Activated CD4-positive, alpha-beta T cell treated with anti-CD3 and anti-CD28 coated beads, Interleukin-2, amount 10 ng/mL, durations not matched to agents 7 days and 5 days (primary cell): ENCODE measurements at regions of chr3 and their contacts with region 1.

Region 1: DNA sequence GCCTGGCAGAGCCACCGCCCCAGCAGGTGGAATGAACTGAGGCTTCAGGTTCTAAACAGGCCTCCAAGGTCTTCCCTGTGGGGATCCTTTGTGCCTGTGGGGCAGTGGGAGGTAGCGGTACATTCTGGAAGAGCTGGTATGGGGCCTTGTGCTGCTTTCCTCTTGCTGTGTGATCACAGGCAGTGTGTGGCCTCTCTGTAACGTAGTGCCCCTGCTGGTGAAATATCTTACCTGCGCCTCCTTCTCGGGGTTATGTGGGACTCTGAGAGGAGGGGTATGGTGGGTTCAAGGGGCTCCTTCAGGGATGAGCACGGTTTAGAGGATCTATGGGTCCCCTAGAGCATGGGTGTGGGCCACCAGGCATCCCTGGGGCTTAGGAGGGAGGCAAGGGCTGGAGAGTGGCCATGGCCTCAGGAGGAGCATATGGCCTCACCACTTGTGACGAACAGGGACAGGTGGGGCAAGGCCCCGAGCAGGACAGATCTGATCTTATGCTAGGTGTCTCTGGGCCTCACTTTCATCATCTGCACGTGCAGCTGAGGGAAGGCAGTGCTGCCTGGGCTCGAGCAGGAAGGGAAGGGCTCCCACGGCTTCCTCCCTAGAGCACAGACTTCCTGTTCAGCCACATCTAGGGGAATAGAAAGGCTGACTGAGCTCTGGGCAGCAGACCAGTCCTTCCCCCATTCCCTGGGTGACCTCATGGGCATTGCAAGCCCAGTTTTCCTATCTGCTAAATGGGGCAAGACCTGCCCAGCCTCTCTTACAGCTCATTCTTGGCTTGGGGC is 1.9 kb upstream of the ALS2CL start:
- DNase-seq: peak; percentile 51
- H3K4me3 Mint-ChIP-seq: peak overlapping the region; percentile 15
- H3K27ac Mint-ChIP-seq: peak overlapping the region; percentile 88
- H3K4me1 Mint-ChIP-seq: peaks cover 52% of the 10 kb centered on the region
- H3K27me3 Mint-ChIP-seq: peaks cover 8% of the 10 kb centered on the region

Region 2: GRCh38 chr3:46655271-46655670 is 40.1 kb before region 1 on chr3:
- CTCF ChIA-PET with region 1: no interaction called
- POLR2A ChIA-PET with region 1: no interaction called
- DNase-seq: no peak
- H3K4me3 Mint-ChIP-seq: no peak overlapping the region
- H3K27ac Mint-ChIP-seq: no peak overlapping the region
- H3K4me1 Mint-ChIP-seq: peaks cover 3% of the 10 kb centered on the region
- H3K27me3 Mint-ChIP-seq: peaks cover 17% of the 10 kb centered on the region

Region 3: DNA sequence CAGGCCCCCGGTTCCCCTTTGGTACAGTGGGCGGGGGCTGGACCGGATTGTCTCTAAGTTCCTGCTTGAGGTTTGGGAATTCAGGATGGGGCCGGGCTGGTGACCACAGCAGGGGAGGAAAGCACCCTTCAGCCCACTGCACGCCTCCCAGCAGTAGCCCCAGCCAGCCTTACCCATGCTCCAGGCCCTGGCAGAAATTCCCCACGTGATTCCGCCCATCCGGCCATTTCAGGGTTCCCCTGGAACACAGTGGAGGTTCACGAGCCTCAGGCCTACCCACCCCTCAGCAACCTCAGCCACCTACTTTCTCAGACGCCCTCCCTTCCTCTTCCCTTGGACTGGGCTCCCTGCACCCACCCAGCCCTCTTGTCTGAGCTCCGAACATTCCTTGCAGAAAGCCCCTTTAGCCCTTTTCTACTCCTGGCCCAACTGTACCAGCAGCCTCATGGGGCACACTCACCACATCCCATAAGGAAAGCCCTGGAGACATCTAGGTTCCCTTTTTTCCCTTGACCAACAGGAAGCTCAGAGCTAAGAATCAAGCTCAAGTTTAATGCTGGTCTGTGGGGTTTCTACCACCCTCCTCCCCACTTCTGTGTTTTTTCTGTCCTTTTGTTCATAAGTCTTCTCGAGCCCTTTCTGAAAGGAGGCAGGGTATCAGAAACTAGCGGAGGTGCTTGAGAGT is 13.4 kb before region 1 on chr3:
- CTCF ChIA-PET with region 1: interaction called, 10 read pairs
- POLR2A ChIA-PET with region 1: no interaction called
- DNase-seq: no peak
- H3K4me3 Mint-ChIP-seq: no peak overlapping the region
- H3K27ac Mint-ChIP-seq: no peak overlapping the region
- H3K4me1 Mint-ChIP-seq: no peaks in the 10 kb centered on the region
- H3K27me3 Mint-ChIP-seq: no peaks in the 10 kb centered on the region

Region 4: DNA sequence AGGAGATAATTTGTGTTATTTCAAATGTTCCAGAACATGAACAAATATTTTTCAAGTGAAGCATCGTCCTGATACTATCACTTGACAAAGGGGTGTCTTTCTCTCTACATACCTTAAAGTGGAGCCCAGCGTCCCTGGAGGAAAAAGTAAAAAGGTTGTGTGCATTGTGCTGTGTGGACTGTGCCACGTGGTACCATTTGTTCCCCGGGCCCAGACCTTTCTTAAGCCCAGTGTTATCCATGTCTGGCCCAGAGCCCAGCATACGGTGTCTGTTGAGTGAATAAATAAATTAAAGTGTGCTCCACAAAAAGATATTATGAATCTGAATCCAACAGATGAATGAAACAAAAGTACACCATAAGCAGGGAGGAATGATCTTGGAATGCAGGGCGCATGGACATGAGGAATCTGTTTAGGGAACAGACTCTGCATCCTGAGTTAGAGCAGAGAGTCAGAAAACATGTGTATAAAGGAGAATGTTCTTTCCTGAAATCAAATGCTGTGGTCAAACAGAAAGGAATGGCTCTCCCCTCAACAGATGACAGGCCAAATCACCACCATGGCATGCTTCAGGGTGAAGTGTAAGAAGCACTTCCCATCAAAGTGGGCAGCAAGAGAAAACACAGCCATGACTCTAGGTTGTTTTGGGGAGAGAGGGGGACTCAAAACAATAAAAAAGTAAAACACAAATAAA is 30.4 kb after region 1 on chr3:
- CTCF ChIA-PET with region 1: no interaction called
- POLR2A ChIA-PET with region 1: no interaction called
- DNase-seq: no peak
- H3K4me3 Mint-ChIP-seq: no peak overlapping the region
- H3K27ac Mint-ChIP-seq: no peak overlapping the region
- H3K4me1 Mint-ChIP-seq: peaks cover 2% of the 10 kb centered on the region
- H3K27me3 Mint-ChIP-seq: peaks cover 18% of the 10 kb centered on the region

Region 5: GRCh38 chr3:46829699-46830208 is 134.4 kb after region 1 on chr3:
- CTCF ChIA-PET with region 1: no interaction called
- POLR2A ChIA-PET with region 1: no interaction called
- DNase-seq: no peak
- H3K4me3 Mint-ChIP-seq: no peak overlapping the region
- H3K27ac Mint-ChIP-seq: no peak overlapping the region
- H3K4me1 Mint-ChIP-seq: peaks cover 16% of the 10 kb centered on the region
- H3K27me3 Mint-ChIP-seq: peaks cover 10% of the 10 kb centered on the region